ENCODE measurements at regions of chr19 and their contacts with region 1.

Region 1: DNA sequence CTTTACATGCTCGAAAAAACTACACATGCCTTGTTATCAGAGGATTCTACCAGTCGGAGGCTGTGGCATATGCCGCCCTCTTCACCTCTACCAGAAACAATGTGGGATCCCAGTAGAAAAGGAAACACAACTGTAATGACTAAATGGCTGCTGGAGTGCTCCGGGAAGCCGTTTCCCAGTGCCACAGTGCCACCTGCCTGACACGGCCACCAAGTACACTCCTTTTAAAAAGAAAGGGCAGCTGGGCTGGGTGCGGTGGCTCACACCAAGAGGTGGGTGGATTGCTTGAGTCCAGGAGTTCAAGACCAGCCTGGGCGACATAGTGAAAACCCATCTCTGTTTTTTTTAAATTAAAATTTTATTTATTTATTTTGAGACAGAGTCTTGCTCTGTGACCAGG is 67.3 kb downstream of the TRPM4 start:
- DNase-seq: no peak
- H3K4me3 ChIP-seq: no peak overlapping the region
- H3K27me3 ChIP-seq: no peaks in the 10 kb centered on the region
- CTCF ChIP-seq: peak; percentile 39

Region 2: GRCh38 chr19:49073514-49074378 is 151.1 kb before region 1 on chr19:
- CTCF ChIA-PET with region 1: interaction called, 11 read pairs
- POLR2A ChIA-PET with region 1: no interaction called
- DNase-seq: no peak
- H3K4me3 ChIP-seq: no peak overlapping the region
- H3K27me3 ChIP-seq: peaks cover 12% of the 10 kb centered on the region
- CTCF ChIP-seq: peak; percentile 34

Region 3: DNA sequence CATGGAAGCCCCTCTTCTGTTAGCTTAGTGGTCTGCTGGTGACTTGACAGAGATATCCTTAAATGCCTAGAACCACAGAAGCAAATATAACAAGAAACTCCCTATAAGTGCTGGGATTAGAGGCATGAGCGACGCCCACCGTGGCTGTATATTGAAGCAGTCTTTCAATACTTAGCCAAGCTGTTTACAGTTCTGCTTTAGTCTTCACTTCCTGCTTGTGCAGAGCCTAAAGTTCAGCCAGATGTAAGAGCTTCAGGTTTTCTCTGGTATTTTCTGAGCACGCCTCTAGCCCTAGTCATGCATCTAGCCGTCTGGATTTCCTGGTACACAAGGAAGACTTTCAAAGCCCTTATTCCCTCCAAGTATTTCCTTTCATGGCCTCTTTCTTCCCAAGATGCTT is 38.7 kb before region 1 on chr19:
- CTCF ChIA-PET with region 1: no interaction called
- POLR2A ChIA-PET with region 1: no interaction called
- DNase-seq: no peak
- H3K4me3 ChIP-seq: no peak overlapping the region
- H3K27me3 ChIP-seq: no peaks in the 10 kb centered on the region
- CTCF ChIP-seq: no peak

Region 4: DNA sequence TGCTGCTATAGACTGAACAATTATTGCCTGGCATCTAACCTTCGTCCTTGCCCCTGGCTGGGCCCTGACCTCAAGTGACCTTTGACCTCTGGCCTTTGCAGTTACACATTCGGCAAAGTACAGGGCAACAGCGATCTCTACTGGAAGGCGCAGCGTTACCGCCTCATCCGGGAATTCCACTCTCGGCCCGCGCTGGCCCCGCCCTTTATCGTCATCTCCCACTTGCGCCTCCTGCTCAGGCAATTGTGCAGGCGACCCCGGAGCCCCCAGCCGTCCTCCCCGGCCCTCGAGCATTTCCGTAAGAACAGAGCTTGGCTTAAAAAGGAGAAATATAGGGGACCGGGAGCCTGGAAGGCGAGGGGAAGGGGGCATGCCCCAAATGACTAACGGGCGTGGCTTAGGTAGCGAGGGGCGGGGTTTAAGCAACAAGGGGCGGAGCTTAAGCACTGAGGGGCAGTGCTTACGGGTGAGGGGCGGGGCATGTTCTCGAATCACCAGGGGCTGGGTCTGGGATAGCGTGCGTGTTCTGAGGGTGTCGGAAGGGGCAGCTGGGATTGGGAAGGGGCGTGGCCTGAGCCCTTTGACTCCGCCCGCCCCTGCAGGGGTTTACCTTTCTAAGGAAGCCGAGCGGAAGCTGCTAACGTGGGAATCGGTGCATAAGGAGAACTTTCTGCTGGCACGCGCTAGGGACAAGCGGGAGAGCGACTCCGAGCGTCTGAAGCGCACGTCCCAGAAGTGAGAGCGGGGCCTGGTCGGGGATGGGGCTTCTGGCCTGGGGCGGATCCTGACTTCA is 14.6 kb before region 1 on chr19:
- CTCF ChIA-PET with region 1: interaction called, 35 read pairs
- POLR2A ChIA-PET with region 1: no interaction called
- DNase-seq: no peak
- H3K4me3 ChIP-seq: no peak overlapping the region
- H3K27me3 ChIP-seq: no peaks in the 10 kb centered on the region
- CTCF ChIP-seq: no peak

Region 5: GRCh38 chr19:49243129-49243528 is 18.3 kb after region 1 on chr19:
- CTCF ChIA-PET with region 1: interaction called, 18 read pairs
- POLR2A ChIA-PET with region 1: no interaction called
- DNase-seq: no peak
- H3K4me3 ChIP-seq: no peak overlapping the region
- H3K27me3 ChIP-seq: peaks cover 2% of the 10 kb centered on the region; the same call in 1 of the 2 replicates
- CTCF ChIP-seq: no peak

Region 6: DNA sequence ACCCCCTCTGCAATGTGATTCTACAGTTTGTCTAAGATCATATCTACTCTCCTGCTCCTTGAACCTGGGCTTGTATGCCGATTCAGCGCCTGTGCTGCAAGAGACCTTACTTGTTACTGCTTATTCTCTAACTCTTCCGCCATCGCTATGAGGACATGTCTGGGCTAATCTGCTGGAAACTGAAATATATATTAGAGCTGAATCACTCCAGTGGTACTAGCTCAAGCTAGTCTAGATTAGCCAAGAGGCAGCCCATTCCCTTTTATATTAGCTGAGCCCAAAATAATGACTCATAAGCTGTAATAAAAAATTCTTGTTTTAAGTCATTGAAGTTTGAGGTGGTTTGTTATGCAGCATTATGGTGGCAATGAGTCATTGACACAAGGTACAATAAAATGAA is 47.3 kb after region 1 on chr19:
- CTCF ChIA-PET with region 1: no interaction called
- POLR2A ChIA-PET with region 1: no interaction called
- DNase-seq: peak; percentile 50
- H3K4me3 ChIP-seq: no peak overlapping the region
- H3K27me3 ChIP-seq: no peaks in the 10 kb centered on the region
- CTCF ChIP-seq: no peak